ENCODE measurements at regions of chr11 and their contacts with region 1.

Region 1: GRCh38 chr11:61332797-61333549 is at the starts of genes DDB1 and TKFC:
- DNase-seq: peak; percentile 99
- ATAC-seq: peak; percentile 89
- H3K4me3 Mint-ChIP-seq: peak within 1 kb of the TSS; percentile 98
- H3K27ac Mint-ChIP-seq: peak within 1 kb of the TSS; percentile 98
- H3K4me1 Mint-ChIP-seq: peaks cover 48% of the 10 kb centered on the region
- H3K27me3 Mint-ChIP-seq: no peaks in the 10 kb centered on the region
- CTCF ChIP-seq: no peak
- total RNA-seq, gene DDB1: 270 to 316 TPM (median 295 TPM) in 3 replicates
- total RNA-seq, gene TKFC: 86.8 to 96.5 TPM (median 87.8 TPM) in 3 replicates

Region 2: GRCh38 chr11:61183635-61184034 is 149.3 kb before region 1 on chr11:
- CTCF ChIA-PET with region 1: no interaction called
- POLR2A ChIA-PET with region 1: no interaction called
- DNase-seq: no peak
- ATAC-seq: no peak
- H3K4me3 Mint-ChIP-seq: no peak overlapping the region
- H3K27ac Mint-ChIP-seq: no peak overlapping the region
- H3K4me1 Mint-ChIP-seq: no peaks in the 10 kb centered on the region
- H3K27me3 Mint-ChIP-seq: no peaks in the 10 kb centered on the region; the same call in 1 of the 2 replicates
- CTCF ChIP-seq: no peak

Region 3: GRCh38 chr11:61281581-61282250 is 51.3 kb before region 1 on chr11:
- CTCF ChIA-PET with region 1: interaction called, 15 read pairs
- POLR2A ChIA-PET with region 1: interaction called, 3 read pairs
- DNase-seq: peak; percentile 91
- ATAC-seq: peak; percentile 96
- H3K4me3 Mint-ChIP-seq: peak overlapping the region; percentile 33; the same call in 1 of the 2 replicates
- H3K27ac Mint-ChIP-seq: no peak overlapping the region
- H3K4me1 Mint-ChIP-seq: peaks cover 31% of the 10 kb centered on the region
- H3K27me3 Mint-ChIP-seq: peaks cover 2% of the 10 kb centered on the region; the same call in 1 of the 2 replicates
- CTCF ChIP-seq: no peak

Region 4: DNA sequence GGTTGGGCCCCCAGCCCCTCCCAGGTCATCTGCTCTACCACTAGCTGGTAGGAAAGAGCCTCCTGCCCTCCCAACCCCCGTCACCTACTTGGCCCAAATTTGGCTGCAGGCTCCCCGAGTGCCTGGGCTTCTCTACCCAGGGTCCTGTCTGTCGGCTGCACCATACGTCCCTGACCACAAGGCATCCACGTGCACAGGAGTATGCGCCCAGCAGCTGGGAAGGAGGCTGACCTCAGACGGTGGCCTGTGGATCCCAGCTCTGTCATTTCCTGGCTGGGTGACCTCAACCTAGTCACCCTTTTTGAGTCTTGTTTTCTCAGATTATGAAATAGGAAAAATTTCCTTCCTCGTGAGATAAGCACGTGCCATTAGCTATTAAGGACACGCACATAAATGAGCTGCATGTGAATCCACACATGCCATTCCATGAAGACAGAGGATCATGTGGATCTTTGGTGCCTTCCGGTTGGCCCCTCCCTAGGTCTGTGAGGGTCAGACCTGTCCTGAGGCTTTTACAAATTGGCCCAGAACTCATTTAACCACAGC is 15.0 kb after region 1 on chr11:
- CTCF ChIA-PET with region 1: interaction called, 21 read pairs
- POLR2A ChIA-PET with region 1: no interaction called
- DNase-seq: no peak
- ATAC-seq: peak; percentile 40; the same call in 1 of the 2 replicates
- H3K4me3 Mint-ChIP-seq: no peak overlapping the region
- H3K27ac Mint-ChIP-seq: peak overlapping the region; percentile 16; the same call in 1 of the 2 replicates
- H3K4me1 Mint-ChIP-seq: no peaks in the 10 kb centered on the region
- H3K27me3 Mint-ChIP-seq: no peaks in the 10 kb centered on the region
- CTCF ChIP-seq: no peak

Region 5: DNA sequence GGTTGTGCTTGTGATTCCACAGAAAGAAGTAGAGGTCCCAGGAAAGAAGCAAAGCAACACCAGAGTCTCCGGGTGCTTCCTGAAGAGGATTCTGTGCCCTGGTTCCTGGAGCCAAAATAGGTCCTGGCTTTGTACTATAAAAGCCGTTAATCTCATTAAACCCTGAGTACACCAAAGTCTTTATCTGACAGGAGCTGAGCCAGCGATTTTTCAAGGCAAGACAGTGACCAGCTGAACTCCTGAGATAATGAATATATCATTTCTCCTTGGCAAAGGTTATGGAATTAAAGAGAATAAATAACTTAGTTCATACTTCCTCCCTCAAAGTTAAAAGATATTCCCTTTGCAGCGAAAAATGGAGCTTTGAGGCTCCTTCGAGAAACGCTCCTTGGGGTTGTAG is 34.4 kb after region 1 on chr11:
- CTCF ChIA-PET with region 1: interaction called, 93 read pairs
- POLR2A ChIA-PET with region 1: interaction called, 29 read pairs
- DNase-seq: no peak
- ATAC-seq: no peak
- H3K4me3 Mint-ChIP-seq: no peak overlapping the region
- H3K27ac Mint-ChIP-seq: no peak overlapping the region
- H3K4me1 Mint-ChIP-seq: peaks cover 14% of the 10 kb centered on the region
- H3K27me3 Mint-ChIP-seq: no peaks in the 10 kb centered on the region
- CTCF ChIP-seq: no peak

Region 6: DNA sequence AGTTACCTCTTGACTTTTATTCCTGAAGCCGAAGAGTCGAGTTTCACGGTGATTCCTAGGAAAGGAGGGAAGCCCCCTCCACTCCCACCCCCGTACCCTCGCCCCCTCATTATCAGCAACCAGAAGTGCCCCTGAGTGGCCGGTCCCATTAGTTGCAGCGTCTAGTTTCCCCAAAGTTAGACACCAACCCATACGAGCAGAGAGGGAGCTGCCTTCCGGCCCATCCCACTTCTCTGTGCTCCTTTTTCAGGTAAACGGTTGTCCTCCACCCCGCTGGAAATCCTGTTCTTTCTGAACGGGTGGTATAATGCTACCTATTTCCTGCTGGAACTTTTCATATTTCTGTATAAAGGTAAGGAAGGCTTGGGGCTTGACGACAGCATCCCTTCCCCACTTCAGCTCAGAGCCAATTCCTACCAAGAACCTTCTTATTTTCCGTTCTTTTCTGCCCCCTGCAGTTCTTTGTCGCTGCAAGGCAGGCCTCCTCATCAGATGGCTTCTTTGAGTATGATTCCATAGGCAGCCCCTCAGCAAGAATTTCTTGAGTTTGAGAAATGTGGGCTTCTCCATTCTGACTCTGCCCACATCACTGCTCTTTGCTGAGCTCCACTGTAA is 60.1 kb after region 1 on chr11:
- CTCF ChIA-PET with region 1: interaction called, 346 read pairs
- POLR2A ChIA-PET with region 1: interaction called, 6 read pairs
- DNase-seq: no peak
- ATAC-seq: peak; percentile 14
- H3K4me3 Mint-ChIP-seq: peak overlapping the region; percentile 96
- H3K27ac Mint-ChIP-seq: peak overlapping the region; percentile 80
- H3K4me1 Mint-ChIP-seq: peaks cover 22% of the 10 kb centered on the region
- H3K27me3 Mint-ChIP-seq: no peaks in the 10 kb centered on the region
- CTCF ChIP-seq: no peak

Region 7: DNA sequence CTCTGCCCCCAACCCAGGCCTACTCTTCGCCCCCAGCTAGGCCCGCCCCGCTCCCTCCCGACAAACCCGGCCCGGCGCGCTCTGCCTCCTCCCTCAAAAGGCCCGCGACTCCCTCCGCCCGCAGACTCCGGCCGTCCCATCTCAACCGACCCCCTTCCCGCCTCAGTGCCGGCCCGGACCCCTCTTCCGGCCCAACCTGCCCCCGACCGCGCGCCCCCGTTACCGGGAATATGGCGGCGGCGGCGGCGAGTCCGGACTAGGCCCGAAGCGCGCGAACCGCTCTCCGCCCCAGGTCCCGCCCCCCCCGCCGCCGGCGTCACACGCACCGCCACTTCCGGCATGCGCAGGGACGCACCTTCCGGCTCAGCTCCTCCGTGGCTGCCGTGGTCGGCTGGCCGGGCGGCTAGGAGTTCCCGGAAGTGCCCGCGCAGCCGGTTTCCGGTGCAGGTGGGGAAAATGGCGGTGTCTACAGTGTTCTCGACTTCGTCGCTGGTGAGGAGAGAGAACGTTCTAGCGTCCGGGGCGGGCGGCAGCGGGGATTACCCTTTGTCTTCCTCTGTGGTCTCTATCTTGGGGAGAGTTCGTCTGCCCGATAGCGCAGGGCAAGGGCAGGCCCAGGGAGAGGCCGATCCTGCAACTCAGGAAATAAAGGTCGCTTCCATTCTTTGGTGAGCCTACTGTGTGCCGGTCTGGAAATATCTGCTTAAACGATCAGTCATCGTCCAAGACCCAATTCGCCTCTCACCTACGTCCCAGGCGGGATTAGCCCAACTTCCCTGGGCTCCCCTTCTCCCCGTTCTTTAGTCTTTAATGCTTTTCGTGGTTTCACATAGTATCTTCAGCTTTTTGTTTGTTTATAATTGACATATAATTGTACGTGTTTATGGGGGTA is 97.0 kb after region 1 on chr11 and contains the starts of genes CPSF7 and SDHAF2:
- CTCF ChIA-PET with region 1: interaction called, 18 read pairs
- POLR2A ChIA-PET with region 1: interaction called, 8 read pairs
- DNase-seq: peak; percentile 97
- ATAC-seq: peak; percentile 86
- H3K4me3 Mint-ChIP-seq: peak within 1 kb of the TSS; percentile 100
- H3K27ac Mint-ChIP-seq: peak within 1 kb of the TSS; percentile 100
- H3K4me1 Mint-ChIP-seq: peaks cover 20% of the 10 kb centered on the region
- H3K27me3 Mint-ChIP-seq: no peaks in the 10 kb centered on the region
- CTCF ChIP-seq: no peak
- total RNA-seq, gene CPSF7: 86.0 to 90.7 TPM (median 88.3 TPM) in 3 replicates
- total RNA-seq, gene SDHAF2: 36.2 to 36.8 TPM (median 36.5 TPM) in 3 replicates

Region 8: GRCh38 chr11:61460474-61460881 is 127.5 kb after region 1 on chr11:
- CTCF ChIA-PET with region 1: no interaction called
- POLR2A ChIA-PET with region 1: no interaction called
- DNase-seq: no peak
- ATAC-seq: no peak
- H3K4me3 Mint-ChIP-seq: no peak overlapping the region
- H3K27ac Mint-ChIP-seq: 0 out of 2 replicates have a peak overlapping the region, but pooled peaks have one; percentile 21
- H3K4me1 Mint-ChIP-seq: peaks cover 2% of the 10 kb centered on the region; the same call in 1 of the 2 replicates
- H3K27me3 Mint-ChIP-seq: no peaks in the 10 kb centered on the region
- CTCF ChIP-seq: no peak